ENCODE measurements at regions of chr11 and their contacts with region 1.

Region 1: GRCh38 chr11:2699531-2700414 is at the start of gene KCNQ1OT1:
- DNase-seq: peak; percentile 96
- H3K4me3 ChIP-seq: peak within 1 kb of the TSS; percentile 59 to 85 (median 78)
- H3K27ac ChIP-seq: peak within 1 kb of the TSS; percentile 92 to 98 (median 94)
- H3K4me1 ChIP-seq: peaks cover 3 to 38% (median 36%) of the 10 kb centered on the region in 4 donors
- H3K27me3 ChIP-seq: no peaks in the 10 kb centered on the region
- CTCF ChIP-seq: no peak
- EP300 ChIP-seq: no peak
- POLR2A ChIP-seq: peak; percentile 73
- total RNA-seq, gene KCNQ1OT1: 0.66 to 2.5 (median 1.3) TPM

Region 2: DNA sequence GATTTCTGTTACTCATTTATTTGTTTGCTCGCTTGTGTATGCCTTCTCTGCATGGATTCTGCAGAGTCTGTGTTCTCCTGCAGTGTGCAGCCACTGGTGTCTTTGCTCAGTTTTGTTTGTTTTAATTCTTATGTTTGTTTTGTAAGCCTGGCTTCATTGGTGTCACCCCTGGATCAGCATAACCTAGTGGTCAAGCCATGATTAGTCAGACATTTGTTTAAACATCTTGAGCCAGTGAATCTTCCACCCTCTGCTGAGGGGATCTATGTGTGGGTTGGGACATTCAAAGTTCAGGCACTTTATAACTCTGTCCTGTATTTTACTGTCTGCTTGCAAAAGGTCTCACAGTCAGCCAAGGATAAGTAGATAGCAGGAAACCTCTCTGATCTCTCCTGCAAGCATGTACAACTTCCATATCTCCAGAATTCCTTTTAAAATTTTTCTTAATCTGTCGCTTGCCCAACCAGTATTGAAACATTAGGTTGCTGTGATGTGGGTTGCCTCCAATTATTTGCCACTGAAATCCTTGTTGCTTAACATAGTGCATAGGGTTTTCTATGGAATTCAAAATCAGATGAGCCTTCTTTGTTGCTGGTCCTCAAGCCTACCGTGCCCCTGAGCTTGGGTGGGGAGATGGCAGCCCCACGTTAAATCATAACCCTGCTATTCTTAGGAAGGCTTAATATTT is 86.7 kb before region 1 on chr11:
- intact Hi-C with region 1: no loop called
- DNase-seq: no peak
- H3K4me3 ChIP-seq: no peak overlapping the region
- H3K27ac ChIP-seq: no peak overlapping the region
- H3K4me1 ChIP-seq: no peaks in the 10 kb centered on the region
- H3K27me3 ChIP-seq: no peaks in the 10 kb centered on the region
- CTCF ChIP-seq: no peak
- EP300 ChIP-seq: no peak
- POLR2A ChIP-seq: no peak

Region 3: GRCh38 chr11:2644844-2645778 is 54.7 kb before region 1 on chr11:
- intact Hi-C with region 1: no loop called
- DNase-seq: no peak
- H3K4me3 ChIP-seq: no peak overlapping the region
- H3K27ac ChIP-seq: no peak overlapping the region
- H3K4me1 ChIP-seq: no peaks in the 10 kb centered on the region
- H3K27me3 ChIP-seq: no peaks in the 10 kb centered on the region
- CTCF ChIP-seq: no peak
- EP300 ChIP-seq: no peak
- POLR2A ChIP-seq: no peak

Region 4: GRCh38 chr11:2825889-2826678 is 126.3 kb after region 1 on chr11:
- intact Hi-C with region 1: loop called (anchors 5 kb)
- DNase-seq: peak; percentile 94
- H3K4me3 ChIP-seq: peak overlapping the region; percentile 34 to 54 (median 40)
- H3K27ac ChIP-seq: peak overlapping the region; percentile 90 to 99 (median 96)
- H3K4me1 ChIP-seq: peaks cover 35 to 53% (median 41%) of the 10 kb centered on the region in 4 donors
- H3K27me3 ChIP-seq: no peaks in the 10 kb centered on the region
- CTCF ChIP-seq: no peak
- EP300 ChIP-seq: peak; percentile 55
- POLR2A ChIP-seq: no peak

Region 5: DNA sequence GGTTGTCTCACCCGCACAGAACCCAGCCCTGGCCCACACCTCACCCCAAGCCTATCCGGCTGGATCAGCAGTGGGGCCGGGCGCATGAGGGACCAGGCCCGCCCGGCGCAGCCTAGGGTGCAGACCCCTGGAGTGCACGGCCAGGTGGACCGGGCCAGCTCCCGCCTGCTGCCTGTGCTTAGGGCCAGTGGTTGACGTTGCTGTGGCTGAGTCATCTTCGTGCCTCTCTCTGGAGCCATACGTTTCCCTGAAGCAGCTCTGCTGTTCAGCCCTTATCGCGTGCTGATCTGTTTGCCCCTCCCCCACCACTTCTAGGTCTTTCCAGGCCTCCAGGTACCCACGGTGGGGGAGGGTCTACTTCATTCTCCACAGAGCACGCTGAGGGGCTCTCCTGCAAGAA is 146.3 kb after region 1 on chr11:
- intact Hi-C with region 1: no loop called
- DNase-seq: no peak
- H3K4me3 ChIP-seq: no peak overlapping the region
- H3K27ac ChIP-seq: no peak overlapping the region
- H3K4me1 ChIP-seq: no peaks in the 10 kb centered on the region
- H3K27me3 ChIP-seq: no peaks in the 10 kb centered on the region
- CTCF ChIP-seq: no peak
- EP300 ChIP-seq: no peak
- POLR2A ChIP-seq: no peak

Measured in esophagus muscularis mucosa (tissue), 4 donors.